ENCODE measurements at regions of chr15 and their contacts with region 1.

Region 1: DNA sequence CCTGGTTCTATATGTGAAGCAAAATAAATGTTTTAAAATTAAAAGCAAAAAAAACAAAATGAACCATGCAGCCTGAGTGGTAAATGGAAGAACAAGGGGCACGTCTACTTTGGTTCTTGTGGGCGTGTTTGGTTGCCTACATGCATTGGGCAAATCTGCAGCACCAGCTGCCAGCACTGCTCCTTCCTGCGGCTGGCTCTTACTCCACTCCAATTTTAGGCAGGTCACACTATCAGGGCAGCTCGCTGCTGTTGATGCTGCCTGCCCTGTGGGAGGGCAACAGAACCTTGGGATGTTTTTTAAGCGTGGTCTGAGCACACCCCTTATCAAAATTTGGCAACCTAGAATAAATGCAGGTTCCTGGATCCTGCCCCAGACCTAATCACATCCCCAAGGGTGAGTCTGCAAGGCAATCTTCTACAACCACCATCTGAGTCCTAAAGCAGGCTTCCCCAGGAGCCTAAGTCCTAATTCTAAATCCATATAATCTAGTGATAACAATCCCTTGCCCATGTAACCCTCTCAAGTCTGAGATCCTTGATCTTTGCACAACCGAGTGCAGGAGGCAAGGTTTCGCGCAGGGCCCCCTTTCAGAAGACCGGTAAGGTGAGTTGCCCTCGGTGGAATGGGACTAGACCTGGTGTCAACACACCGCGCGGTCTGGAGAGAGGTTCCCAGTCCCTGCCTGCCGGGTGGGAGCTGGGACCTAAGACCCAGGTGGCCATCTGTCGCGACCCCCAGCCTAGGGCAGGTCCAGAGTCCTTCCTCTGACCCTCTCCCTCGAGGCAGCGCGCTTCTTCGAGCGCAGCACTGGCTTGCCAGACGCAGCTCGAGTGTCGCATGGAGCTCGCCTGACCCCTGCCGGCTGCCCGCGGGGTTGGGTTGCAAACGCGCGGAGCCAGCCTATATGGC is 15.9 kb downstream of the IVD start:
- DNase-seq: peak; percentile 68
- H3K4me3 Mint-ChIP-seq: peak overlapping the region; percentile 14
- H3K27ac Mint-ChIP-seq: peak overlapping the region; percentile 73
- H3K4me1 Mint-ChIP-seq: peaks cover 19% of the 10 kb centered on the region
- H3K27me3 Mint-ChIP-seq: no peaks in the 10 kb centered on the region
- CTCF ChIP-seq: peak; percentile 92

Region 2: GRCh38 chr15:40313531-40314398 is 107.7 kb before region 1 on chr15:
- CTCF ChIA-PET with region 1: interaction called, 10 read pairs
- POLR2A ChIA-PET with region 1: no interaction called
- intact Hi-C with region 1: no loop called
- DNase-seq: peak; percentile 94
- H3K4me3 Mint-ChIP-seq: peak overlapping the region; percentile 18
- H3K27ac Mint-ChIP-seq: no peak overlapping the region
- H3K4me1 Mint-ChIP-seq: peaks cover 13% of the 10 kb centered on the region
- H3K27me3 Mint-ChIP-seq: no peaks in the 10 kb centered on the region
- CTCF ChIP-seq: no peak

Region 3: DNA sequence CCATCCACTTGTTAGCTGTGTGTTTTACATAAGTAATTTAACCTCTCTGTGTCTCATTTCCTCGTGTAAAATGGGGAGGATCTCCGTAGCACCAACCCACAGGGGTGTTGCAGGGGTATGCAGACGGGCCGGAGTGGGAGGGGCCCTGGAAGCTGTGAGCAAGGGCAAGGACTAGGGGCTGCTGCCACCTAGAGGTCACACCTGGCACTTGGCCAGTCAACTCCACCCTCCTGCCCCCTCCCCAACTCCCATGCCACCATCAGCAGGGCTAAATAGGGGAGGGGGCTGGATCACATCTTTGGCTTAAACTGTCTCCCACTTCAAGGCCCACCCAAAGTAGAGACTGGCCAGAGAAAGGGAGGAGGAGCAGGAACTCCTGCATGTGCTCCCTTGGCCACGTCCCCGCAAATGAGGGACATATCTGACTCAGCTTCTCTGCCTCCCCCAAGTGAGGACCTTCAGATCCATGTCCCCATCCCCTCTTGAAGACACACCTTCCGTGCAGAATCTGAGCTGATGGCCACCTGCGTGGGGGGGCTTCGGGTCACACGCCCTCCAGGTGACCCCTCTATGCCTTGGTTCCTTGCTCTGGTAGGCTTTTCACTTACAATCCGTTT is 83.4 kb before region 1 on chr15:
- CTCF ChIA-PET with region 1: interaction called, 76 read pairs
- POLR2A ChIA-PET with region 1: interaction called, 5 read pairs
- intact Hi-C with region 1: no loop called
- DNase-seq: peak; percentile 68
- H3K4me3 Mint-ChIP-seq: peak overlapping the region; percentile 79
- H3K27ac Mint-ChIP-seq: peak overlapping the region; percentile 79
- H3K4me1 Mint-ChIP-seq: peaks cover 38% of the 10 kb centered on the region
- H3K27me3 Mint-ChIP-seq: no peaks in the 10 kb centered on the region
- CTCF ChIP-seq: peak; percentile 76

Region 4: GRCh38 chr15:40405501-40406381 is 15.8 kb before region 1 on chr15 and contains the start of gene IVD:
- CTCF ChIA-PET with region 1: interaction called, 7 read pairs
- POLR2A ChIA-PET with region 1: interaction called, 33 read pairs
- intact Hi-C with region 1: no loop called
- DNase-seq: peak; percentile 94
- H3K4me3 Mint-ChIP-seq: peak within 1 kb of the TSS; percentile 83
- H3K27ac Mint-ChIP-seq: peak within 1 kb of the TSS; percentile 64
- H3K4me1 Mint-ChIP-seq: peaks cover 6% of the 10 kb centered on the region
- H3K27me3 Mint-ChIP-seq: no peaks in the 10 kb centered on the region
- CTCF ChIP-seq: no peak
- total RNA-seq, gene IVD: 53.8 and 61.6 TPM in 2 replicates